ENCODE measurements at regions of chrX and their contacts with region 1.

Region 1: DNA sequence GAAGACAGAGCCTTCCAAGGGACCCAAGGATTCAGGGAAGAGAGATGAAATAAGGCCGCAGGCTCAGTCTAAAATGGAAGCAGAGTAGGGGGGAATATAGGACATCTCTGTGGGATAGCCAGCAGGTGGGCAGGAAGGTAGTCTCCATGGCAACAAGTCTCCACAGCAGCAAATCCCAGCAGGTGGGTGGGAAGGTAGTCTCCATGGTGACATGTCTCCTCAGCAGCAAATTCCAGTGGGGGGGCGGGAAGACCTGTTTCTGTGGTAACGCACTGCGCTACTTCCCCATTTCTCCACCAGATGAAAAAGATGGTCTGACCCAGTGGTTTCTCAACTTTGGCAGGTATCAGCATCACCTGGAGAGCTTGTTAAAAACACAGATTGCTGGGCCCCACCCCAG is 18.3 kb downstream of the NLGN3 start:
- DNase-seq: no peak
- H3K4me3 ChIP-seq: no peak overlapping the region
- H3K27ac ChIP-seq: no peak overlapping the region
- H3K4me1 ChIP-seq: no peaks in the 10 kb centered on the region
- H3K27me3 ChIP-seq: no peaks in the 10 kb centered on the region
- CTCF ChIP-seq: no peak
- POLR2A ChIP-seq: no peak

Region 2: DNA sequence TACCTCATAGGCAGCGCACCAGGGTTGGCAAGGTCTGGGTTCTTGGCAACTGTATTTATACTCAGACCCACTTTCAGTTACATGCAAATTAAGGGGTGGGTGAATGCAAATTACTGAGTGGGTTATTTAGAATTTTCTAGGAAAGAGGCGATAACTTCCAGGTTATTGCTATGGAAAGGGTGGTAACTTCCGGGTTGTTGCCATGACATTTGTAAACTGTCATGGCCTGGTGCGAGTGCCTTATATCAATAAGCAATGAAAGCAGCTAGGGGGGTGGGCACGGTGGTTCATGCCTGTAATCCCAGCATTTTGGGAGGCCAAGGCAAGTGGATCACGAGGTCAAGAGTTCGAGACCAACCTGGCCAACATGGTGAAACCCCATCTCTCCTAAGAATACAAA is 174.6 kb before region 1 on chrX:
- intact Hi-C with region 1: loop called (anchors 10 kb)
- DNase-seq: no peak
- H3K4me3 ChIP-seq: no peak overlapping the region
- H3K27ac ChIP-seq: no peak overlapping the region
- H3K4me1 ChIP-seq: no peaks in the 10 kb centered on the region
- H3K27me3 ChIP-seq: no peaks in the 10 kb centered on the region
- CTCF ChIP-seq: no peak
- POLR2A ChIP-seq: no peak

Measured in esophagus squamous epithelium (tissue), 5 donors.